H1 (cell line): ENCODE measurements at regions of chr10 and their contacts with region 1.

Region 1: GRCh38 chr10:124388823-124389612 is 29.7 kb downstream of the OAT start:
- DNase-seq: peak; percentile 47 to 98
- H3K4me3 ChIP-seq: peak overlapping the region in 3 of 4 experiments; percentile 35 to 61 (median 38); a peak in 6 of 8 replicates
- H3K27ac ChIP-seq: no peak overlapping the region
- H3K4me1 ChIP-seq: peaks cover 0 to 8% (median 4%) of the 10 kb centered on the region in 4 experiments; a peak in 5 of 7 replicates
- H3K27me3 ChIP-seq: peaks cover 0 to 6% (median 5%) of the 10 kb centered on the region in 4 experiments; a peak in 5 of 7 replicates
- CTCF ChIP-seq: peak; percentile 86 to 94 (median 92)
- EP300 ChIP-seq: no peak
- POLR2A ChIP-seq: no peak
- RAD21 ChIP-seq: peak; percentile 95 to 97

Region 2: GRCh38 chr10:124249812-124250432 is 139.1 kb before region 1 on chr10:
- CTCF ChIA-PET with region 1: interaction called, 10 read pairs
- POLR2A ChIA-PET with region 1: no interaction called
- DNase-seq: peak in 1 of 2 experiments; percentile 58
- H3K4me3 ChIP-seq: no peak overlapping the region
- H3K27ac ChIP-seq: no peak overlapping the region
- H3K4me1 ChIP-seq: no peaks in the 10 kb centered on the region
- H3K27me3 ChIP-seq: no peaks in the 10 kb centered on the region; a peak in 2 of 7 replicates
- CTCF ChIP-seq: peak in 1 of 3 experiments; percentile 70; a peak in 2 of 4 replicates
- EP300 ChIP-seq: no peak
- POLR2A ChIP-seq: no peak
- RAD21 ChIP-seq: peak; percentile 36 to 38

Region 3: GRCh38 chr10:124279882-124280281 is 109.1 kb before region 1 on chr10:
- CTCF ChIA-PET with region 1: interaction called, 17 read pairs
- POLR2A ChIA-PET with region 1: no interaction called
- DNase-seq: no peak
- H3K4me3 ChIP-seq: no peak overlapping the region
- H3K27ac ChIP-seq: no peak overlapping the region
- H3K4me1 ChIP-seq: no peaks in the 10 kb centered on the region
- H3K27me3 ChIP-seq: no peaks in the 10 kb centered on the region
- CTCF ChIP-seq: no peak
- EP300 ChIP-seq: no peak
- POLR2A ChIP-seq: no peak
- RAD21 ChIP-seq: no peak

Region 4: GRCh38 chr10:124329941-124330340 is 59.1 kb before region 1 on chr10:
- CTCF ChIA-PET with region 1: no interaction called
- POLR2A ChIA-PET with region 1: no interaction called
- DNase-seq: peak in 1 of 2 experiments; percentile 6
- H3K4me3 ChIP-seq: no peak overlapping the region
- H3K27ac ChIP-seq: no peak overlapping the region
- H3K4me1 ChIP-seq: no peaks in the 10 kb centered on the region
- H3K27me3 ChIP-seq: no peaks in the 10 kb centered on the region; a peak in 1 of 7 replicates
- CTCF ChIP-seq: no peak
- EP300 ChIP-seq: no peak
- POLR2A ChIP-seq: no peak
- RAD21 ChIP-seq: no peak

Region 5: GRCh38 chr10:124364633-124365032 is 24.4 kb before region 1 on chr10:
- CTCF ChIA-PET with region 1: interaction called, 14 read pairs
- POLR2A ChIA-PET with region 1: no interaction called
- DNase-seq: no peak
- H3K4me3 ChIP-seq: no peak overlapping the region
- H3K27ac ChIP-seq: no peak overlapping the region
- H3K4me1 ChIP-seq: peaks cover 0 to 7% (median 3%) of the 10 kb centered on the region in 4 experiments; a peak in 4 of 7 replicates
- H3K27me3 ChIP-seq: no peaks in the 10 kb centered on the region
- CTCF ChIP-seq: no peak
- EP300 ChIP-seq: no peak
- POLR2A ChIP-seq: no peak
- RAD21 ChIP-seq: no peak

Region 6: GRCh38 chr10:124378881-124379471 is 10.0 kb before region 1 on chr10:
- CTCF ChIA-PET with region 1: interaction called, 12 read pairs
- POLR2A ChIA-PET with region 1: interaction called, 3 read pairs
- DNase-seq: no peak
- H3K4me3 ChIP-seq: no peak overlapping the region
- H3K27ac ChIP-seq: no peak overlapping the region
- H3K4me1 ChIP-seq: peaks cover 2 to 7% (median 5%) of the 10 kb centered on the region in 4 experiments; a peak in 6 of 7 replicates
- H3K27me3 ChIP-seq: no peaks in the 10 kb centered on the region; a peak in 1 of 7 replicates
- CTCF ChIP-seq: no peak
- EP300 ChIP-seq: no peak
- POLR2A ChIP-seq: no peak
- RAD21 ChIP-seq: no peak